A549 (cell line): ENCODE measurements at regions of chr12 and their contacts with region 1.

Region 1: DNA sequence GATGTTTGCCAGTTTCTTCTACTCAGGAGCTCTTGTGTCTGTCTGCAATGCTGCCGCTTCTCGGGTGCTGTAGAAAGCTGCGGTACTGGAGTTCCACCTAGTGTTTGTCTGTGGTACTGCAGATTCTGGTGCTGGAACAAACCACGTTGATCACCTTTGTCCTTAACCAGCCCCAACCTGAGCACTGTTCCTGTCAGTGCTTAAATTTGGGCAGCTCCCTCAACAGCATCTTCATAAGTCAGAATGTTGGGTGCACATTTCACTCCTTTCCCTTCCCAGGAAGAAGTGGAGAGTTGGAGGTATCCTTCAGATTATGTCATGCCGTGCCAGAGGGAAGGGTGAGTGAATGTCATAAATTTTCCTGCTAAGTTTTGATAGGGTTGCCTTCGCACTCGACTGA is 48.7 kb upstream of the LALBA start:
- DNase-seq: peak; percentile 70 to 82
- ATAC-seq: peak; percentile 98
- H3K4me3 ChIP-seq: no peak overlapping the region
- H3K27ac ChIP-seq: no peak overlapping the region
- H3K4me1 ChIP-seq: no peaks in the 10 kb centered on the region
- CTCF ChIP-seq: peak; percentile 97
- EP300 ChIP-seq: no peak
- POLR2A ChIP-seq: no peak
- RAD21 ChIP-seq: peak; percentile 96 to 98

Region 2: DNA sequence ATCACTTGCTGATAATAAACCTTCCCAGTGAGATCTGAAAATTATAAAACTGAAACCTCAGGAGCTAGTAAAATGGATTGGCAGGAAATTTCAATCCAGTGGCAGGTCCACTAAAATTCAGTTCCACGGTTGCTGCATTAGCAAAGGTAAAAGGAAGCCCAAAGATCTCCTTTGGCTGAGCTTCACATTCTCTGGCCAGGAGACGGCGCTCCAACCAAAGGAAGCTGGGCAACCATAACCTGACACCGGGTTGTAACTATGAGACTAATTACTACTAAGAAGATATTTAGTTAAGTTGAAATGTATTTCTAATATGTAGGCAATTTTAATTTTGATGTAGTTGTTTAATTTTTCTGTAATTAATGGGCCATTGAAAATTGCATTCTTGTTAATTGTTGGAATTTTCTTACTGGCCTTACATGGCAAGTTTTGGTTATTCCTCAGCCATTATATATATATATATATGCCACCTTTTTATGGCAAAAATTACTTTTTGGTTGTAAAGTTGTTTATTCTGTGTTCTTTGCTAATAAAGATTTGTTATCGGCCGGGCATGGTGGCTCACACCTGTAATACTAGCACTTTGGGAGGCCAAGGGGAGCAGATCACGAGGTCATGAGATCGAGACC is 76.1 kb before region 1 on chr12:
- CTCF ChIA-PET with region 1: interaction called, 88 read pairs
- POLR2A ChIA-PET with region 1: interaction called, 3 read pairs
- DNase-seq: peak; percentile 21 to 59
- ATAC-seq: peak; percentile 73 to 90; a peak in 5 of 6 replicates
- H3K4me3 ChIP-seq: no peak overlapping the region
- H3K27ac ChIP-seq: no peak overlapping the region
- H3K4me1 ChIP-seq: no peaks in the 10 kb centered on the region
- CTCF ChIP-seq: peak; percentile 73
- EP300 ChIP-seq: no peak
- POLR2A ChIP-seq: no peak
- RAD21 ChIP-seq: peak; percentile 73 to 92

Region 3: DNA sequence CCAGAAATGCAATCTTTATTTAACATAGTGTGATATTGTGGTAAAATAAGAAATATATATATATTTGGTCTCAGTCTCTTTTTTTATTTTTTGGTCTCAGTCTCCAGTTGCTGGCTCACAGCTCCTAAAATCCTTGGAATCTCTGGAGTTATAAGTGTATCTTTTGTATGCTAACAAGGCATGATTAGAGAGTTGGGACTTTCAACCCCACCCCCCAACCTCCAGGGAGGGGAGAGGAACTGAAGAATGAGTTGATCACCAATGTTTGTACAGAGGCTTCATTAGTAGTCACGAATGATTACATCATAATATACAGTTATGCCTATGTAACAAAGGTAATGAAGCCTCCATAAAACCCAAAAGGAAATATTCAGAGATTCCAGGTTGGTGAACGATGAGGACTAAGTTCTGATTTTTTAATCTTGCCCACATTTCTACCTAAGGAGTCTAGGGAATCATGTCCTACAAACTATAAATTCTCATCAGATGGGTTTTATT is 25.9 kb before region 1 on chr12:
- CTCF ChIA-PET with region 1: interaction called, 13 read pairs
- POLR2A ChIA-PET with region 1: no interaction called
- DNase-seq: no peak
- ATAC-seq: no peak
- H3K4me3 ChIP-seq: no peak overlapping the region
- H3K27ac ChIP-seq: no peak overlapping the region
- H3K4me1 ChIP-seq: no peaks in the 10 kb centered on the region
- CTCF ChIP-seq: no peak
- EP300 ChIP-seq: no peak
- POLR2A ChIP-seq: no peak
- RAD21 ChIP-seq: no peak

Region 4: GRCh38 chr12:48601013-48601756 is 17.4 kb before region 1 on chr12:
- CTCF ChIA-PET with region 1: interaction called, 14 read pairs
- POLR2A ChIA-PET with region 1: no interaction called
- DNase-seq: no peak
- ATAC-seq: no peak
- H3K4me3 ChIP-seq: no peak overlapping the region
- H3K27ac ChIP-seq: no peak overlapping the region
- H3K4me1 ChIP-seq: no peaks in the 10 kb centered on the region
- CTCF ChIP-seq: no peak
- EP300 ChIP-seq: no peak
- POLR2A ChIP-seq: no peak
- RAD21 ChIP-seq: no peak

Region 5: GRCh38 chr12:48631057-48631456 is 12.5 kb after region 1 on chr12:
- CTCF ChIA-PET with region 1: interaction called, 14 read pairs
- POLR2A ChIA-PET with region 1: no interaction called
- DNase-seq: no peak
- ATAC-seq: no peak
- H3K4me3 ChIP-seq: no peak overlapping the region
- H3K27ac ChIP-seq: no peak overlapping the region
- H3K4me1 ChIP-seq: no peaks in the 10 kb centered on the region
- CTCF ChIP-seq: no peak
- EP300 ChIP-seq: no peak
- POLR2A ChIP-seq: no peak
- RAD21 ChIP-seq: no peak

Region 6: GRCh38 chr12:48671231-48671856 is 52.8 kb after region 1 on chr12:
- CTCF ChIA-PET with region 1: no interaction called
- POLR2A ChIA-PET with region 1: no interaction called
- DNase-seq: no peak
- ATAC-seq: peak in 1 of 2 experiments; percentile 42; a peak in 2 of 6 replicates
- H3K4me3 ChIP-seq: no peak overlapping the region
- H3K27ac ChIP-seq: no peak overlapping the region
- H3K4me1 ChIP-seq: no peaks in the 10 kb centered on the region
- CTCF ChIP-seq: no peak
- EP300 ChIP-seq: no peak
- POLR2A ChIP-seq: no peak
- RAD21 ChIP-seq: no peak